Mucosa of descending colon (tissue), 3 donors: ENCODE measurements at regions of chr17 and their contacts with region 1.

Region 1: DNA sequence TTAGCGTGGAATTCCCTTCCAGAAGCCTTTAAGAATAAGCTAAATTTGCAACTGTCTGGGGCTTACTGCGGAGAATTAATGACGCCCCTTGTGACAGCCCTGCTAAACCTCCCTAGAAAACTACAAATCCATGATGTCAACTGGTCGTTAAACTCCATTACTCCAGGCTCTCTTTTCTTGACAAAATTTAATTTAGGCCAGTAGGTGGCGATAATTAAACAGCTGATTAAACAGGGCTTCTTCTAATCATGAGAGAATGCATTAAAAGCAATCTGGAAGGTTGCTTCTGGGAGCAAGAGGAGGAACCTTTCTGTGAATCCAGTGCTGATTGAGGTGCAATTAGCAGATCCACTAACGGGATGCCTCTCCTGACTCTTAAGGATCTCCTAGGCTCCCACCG is 8.1 kb upstream of the NLRP1 start:
- DNase-seq: no peak
- ATAC-seq: peak; percentile 33
- H3K4me3 ChIP-seq: no peak overlapping the region
- H3K4me1 ChIP-seq: no peaks in the 10 kb centered on the region
- CTCF ChIP-seq: peak; percentile 25

Region 2: GRCh38 chr17:5706577-5707216 is 114.3 kb after region 1 on chr17:
- intact Hi-C with region 1: loop called in 1 of 2 experiments (anchors 5 kb)
- DNase-seq: peak in 2 of 3 donors; percentile 73 to 76
- ATAC-seq: peak; percentile 64
- H3K4me3 ChIP-seq: no peak overlapping the region
- H3K4me1 ChIP-seq: no peaks in the 10 kb centered on the region
- CTCF ChIP-seq: peak; percentile 51

Region 3: DNA sequence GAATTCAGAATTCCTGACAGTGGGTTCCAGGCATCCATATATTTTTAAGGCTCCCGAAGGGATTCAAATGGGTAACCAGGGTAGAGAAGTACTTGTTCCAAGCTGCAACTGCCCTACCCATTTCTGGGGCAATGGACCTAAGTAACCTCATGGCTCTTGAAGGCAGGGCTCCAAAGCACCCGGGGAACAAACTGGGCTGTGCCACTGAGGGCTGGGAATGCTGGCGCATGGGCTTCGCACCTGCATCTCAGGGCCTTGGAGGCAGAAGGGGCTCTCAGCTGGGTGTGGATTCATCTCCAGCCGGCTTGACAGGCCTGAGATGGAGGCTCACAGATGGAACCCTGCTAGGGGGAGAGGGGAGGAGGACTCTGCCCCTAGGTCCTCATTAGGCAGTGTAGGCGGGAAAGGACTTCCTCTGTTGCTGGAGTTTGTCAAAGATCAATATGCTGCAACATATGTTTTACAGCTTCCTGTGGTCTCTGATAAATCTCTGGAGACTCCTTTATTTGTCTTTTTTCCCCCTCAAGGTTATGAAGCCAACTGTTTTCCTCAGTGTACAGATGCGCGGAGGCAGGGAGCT is 224.2 kb after region 1 on chr17:
- intact Hi-C with region 1: no loop called
- DNase-seq: no peak
- ATAC-seq: no peak
- H3K4me3 ChIP-seq: no peak overlapping the region
- H3K4me1 ChIP-seq: no peaks in the 10 kb centered on the region
- CTCF ChIP-seq: no peak